ENCODE measurements at regions of chr2 and their contacts with region 1.

Region 1: GRCh38 chr2:20135631-20136050 is 84.2 kb upstream of the LAPTM4A start:
- DNase-seq: peak; percentile 51 to 69 (median 69)
- H3K4me3 ChIP-seq: no peak overlapping the region
- H3K27ac ChIP-seq: no peak overlapping the region
- H3K4me1 ChIP-seq: no peaks in the 10 kb centered on the region
- H3K27me3 ChIP-seq: peaks cover 0 to 16% (median 0%) of the 10 kb centered on the region in 5 experiments

Region 2: GRCh38 chr2:20145497-20146193 is 10.0 kb after region 1 on chr2:
- CTCF ChIA-PET with region 1: interaction called, 16 read pairs
- POLR2A ChIA-PET with region 1: interaction called, 4 read pairs
- DNase-seq: no peak
- H3K4me3 ChIP-seq: no peak overlapping the region
- H3K27ac ChIP-seq: no peak overlapping the region
- H3K4me1 ChIP-seq: peaks cover 0 to 5% (median 0%) of the 10 kb centered on the region in 4 experiments
- H3K27me3 ChIP-seq: peaks cover 0 to 6% (median 2%) of the 10 kb centered on the region in 5 experiments